ENCODE measurements at regions of chr7 and their contacts with region 1.

Region 1: GRCh38 chr7:101217388-101218235 is at the starts of genes PLOD3 and ZNHIT1:
- DNase-seq: peak; percentile 96
- ATAC-seq: peak; percentile 91
- H3K4me3 ChIP-seq: peak within 1 kb of the TSS; percentile 93 to 97
- H3K27ac ChIP-seq: peak within 1 kb of the TSS; percentile 91
- H3K4me1 ChIP-seq: peaks cover 0 to 21% of the 10 kb centered on the region in 2 experiments; a peak in 2 of 4 replicates
- H3K27me3 ChIP-seq: no peaks in the 10 kb centered on the region
- CTCF ChIP-seq: 0 out of 6 replicates have a peak, but pooled peaks of 1 of the 3 experiments have one; percentile 15
- POLR2A ChIP-seq: peak; percentile 51
- RAD21 ChIP-seq: no peak
- total RNA-seq, gene PLOD3: 83.7 TPM
- total RNA-seq, gene ZNHIT1: 69.4 TPM

Region 2: GRCh38 chr7:100583132-100584053 is 634.2 kb before region 1 on chr7:
- CTCF ChIA-PET with region 1: no interaction called
- POLR2A ChIA-PET with region 1: no interaction called
- RAD21 ChIA-PET with region 1: no interaction called
- intact Hi-C with region 1: no loop called
- DNase-seq: no peak
- ATAC-seq: no peak
- H3K4me3 ChIP-seq: no peak overlapping the region
- H3K27ac ChIP-seq: peak overlapping the region; percentile 1; the same call in 1 of the 2 replicates
- H3K4me1 ChIP-seq: peaks cover 2 to 22% of the 10 kb centered on the region in 2 experiments; a peak in 3 of 4 replicates
- H3K27me3 ChIP-seq: no peaks in the 10 kb centered on the region
- CTCF ChIP-seq: no peak
- POLR2A ChIP-seq: no peak
- RAD21 ChIP-seq: no peak

Region 3: DNA sequence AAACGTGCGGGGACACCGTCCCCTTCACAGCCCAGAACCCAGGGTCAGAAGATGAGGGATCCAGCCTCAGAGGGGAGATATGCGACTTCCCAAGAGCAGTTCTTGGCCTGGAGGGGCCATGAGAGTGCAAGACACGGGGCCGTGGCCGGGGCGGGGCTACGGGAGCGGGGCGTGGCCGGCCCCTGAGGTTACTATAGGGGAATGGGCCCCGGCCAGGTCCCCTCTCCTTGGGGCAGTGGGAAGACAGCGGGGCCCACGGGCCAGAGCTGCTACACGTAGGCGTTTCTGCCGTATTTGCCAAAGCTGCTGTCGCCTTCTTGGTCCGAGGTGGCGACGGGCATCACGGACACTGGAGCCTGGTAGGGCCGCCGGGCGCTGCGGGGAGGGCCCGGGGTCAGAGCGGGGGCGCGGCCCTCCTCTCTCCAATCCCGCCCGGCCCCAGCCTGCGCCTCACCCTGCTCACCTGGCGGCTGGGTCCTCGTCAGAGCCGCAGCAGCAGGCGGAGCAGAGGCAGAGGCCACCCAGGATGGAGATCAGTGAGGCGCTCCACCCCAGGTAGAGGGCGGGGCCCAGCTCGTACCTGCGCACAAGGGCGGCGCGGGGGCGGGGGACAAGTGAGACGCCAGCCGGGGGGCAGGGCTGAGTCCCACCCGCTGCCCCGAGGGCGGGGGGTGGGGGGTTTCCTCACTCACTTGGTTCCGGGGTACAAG is 14.7 kb after region 1 on chr7:
- CTCF ChIA-PET with region 1: no interaction called
- POLR2A ChIA-PET with region 1: interaction called, 4 read pairs
- RAD21 ChIA-PET with region 1: interaction called in 1 of 2 experiments, 10 read pairs
- intact Hi-C with region 1: loop called (anchors 2 kb)
- DNase-seq: no peak
- ATAC-seq: peak; percentile 91
- H3K4me3 ChIP-seq: peak overlapping the region; percentile 49 to 65
- H3K27ac ChIP-seq: peak overlapping the region; percentile 50
- H3K4me1 ChIP-seq: peaks cover 7 to 20% of the 10 kb centered on the region in 2 experiments
- H3K27me3 ChIP-seq: no peaks in the 10 kb centered on the region
- CTCF ChIP-seq: no peak
- POLR2A ChIP-seq: no peak
- RAD21 ChIP-seq: no peak

Region 4: DNA sequence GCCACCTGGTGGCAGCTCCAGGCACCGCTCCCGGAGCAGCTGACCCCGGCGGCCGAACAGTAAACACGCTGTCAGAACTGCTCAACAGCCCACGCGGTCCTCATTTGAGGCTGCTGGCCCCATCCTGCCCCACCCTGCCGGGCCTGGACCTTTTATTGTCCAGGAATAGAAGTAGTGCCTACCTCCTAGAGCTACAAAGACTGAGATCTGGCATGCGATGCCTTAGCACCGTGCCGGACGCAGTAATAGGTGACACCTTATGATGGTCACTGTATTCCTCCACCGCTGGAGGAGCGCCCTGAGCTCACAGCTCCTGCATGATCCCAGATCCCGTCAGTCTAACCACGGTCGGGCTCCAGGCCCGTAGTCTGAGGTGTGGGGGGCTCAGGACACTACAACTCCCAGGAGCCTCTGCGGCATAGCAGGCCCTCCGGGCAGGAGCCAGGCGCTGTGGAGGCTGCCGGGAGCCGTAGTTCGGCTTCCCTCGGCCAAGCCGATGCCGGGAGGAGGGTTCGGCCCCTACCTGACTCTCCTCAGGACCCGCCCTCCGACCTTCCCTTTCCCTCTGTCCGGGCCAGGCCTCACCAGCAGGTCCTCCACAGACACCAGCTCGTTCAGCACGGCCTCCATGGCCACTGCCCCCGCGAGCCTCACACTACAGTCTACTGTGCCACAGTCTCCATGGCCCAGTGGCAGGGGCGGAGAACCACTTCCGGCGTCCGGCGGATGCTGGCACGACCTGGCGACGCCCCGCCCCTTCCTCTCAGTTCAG is 26.9 kb after region 1 on chr7 and contains the start of gene FIS1:
- CTCF ChIA-PET with region 1: interaction called, 17 read pairs
- POLR2A ChIA-PET with region 1: interaction called, 11 read pairs
- RAD21 ChIA-PET with region 1: no interaction called
- intact Hi-C with region 1: no loop called
- DNase-seq: peak; percentile 81
- ATAC-seq: peak; percentile 92
- H3K4me3 ChIP-seq: peak within 1 kb of the TSS; percentile 99 to 100
- H3K27ac ChIP-seq: peak within 1 kb of the TSS; percentile 89
- H3K4me1 ChIP-seq: peaks cover 14 to 22% of the 10 kb centered on the region in 2 experiments
- H3K27me3 ChIP-seq: no peaks in the 10 kb centered on the region
- CTCF ChIP-seq: peak in 2 of 3 experiments; percentile 84 to 87; a peak in 4 of 6 replicates
- POLR2A ChIP-seq: no peak
- RAD21 ChIP-seq: no peak
- total RNA-seq, gene FIS1: 114 TPM